Activated T-helper 2 cell treated with anti-CD3 and anti-CD28 coated beads, Interferon-gamma antibody, Interleukin-2, Interleukin-4, amounts not matched to agents 10 μg/mL and 5 μg/mL and 100 μg/mL, durations not matched to agents 14 hours and 24 hours and 36 hours (primary cell): ENCODE measurements at regions of chr7 and their contacts with region 1.

Region 1: DNA sequence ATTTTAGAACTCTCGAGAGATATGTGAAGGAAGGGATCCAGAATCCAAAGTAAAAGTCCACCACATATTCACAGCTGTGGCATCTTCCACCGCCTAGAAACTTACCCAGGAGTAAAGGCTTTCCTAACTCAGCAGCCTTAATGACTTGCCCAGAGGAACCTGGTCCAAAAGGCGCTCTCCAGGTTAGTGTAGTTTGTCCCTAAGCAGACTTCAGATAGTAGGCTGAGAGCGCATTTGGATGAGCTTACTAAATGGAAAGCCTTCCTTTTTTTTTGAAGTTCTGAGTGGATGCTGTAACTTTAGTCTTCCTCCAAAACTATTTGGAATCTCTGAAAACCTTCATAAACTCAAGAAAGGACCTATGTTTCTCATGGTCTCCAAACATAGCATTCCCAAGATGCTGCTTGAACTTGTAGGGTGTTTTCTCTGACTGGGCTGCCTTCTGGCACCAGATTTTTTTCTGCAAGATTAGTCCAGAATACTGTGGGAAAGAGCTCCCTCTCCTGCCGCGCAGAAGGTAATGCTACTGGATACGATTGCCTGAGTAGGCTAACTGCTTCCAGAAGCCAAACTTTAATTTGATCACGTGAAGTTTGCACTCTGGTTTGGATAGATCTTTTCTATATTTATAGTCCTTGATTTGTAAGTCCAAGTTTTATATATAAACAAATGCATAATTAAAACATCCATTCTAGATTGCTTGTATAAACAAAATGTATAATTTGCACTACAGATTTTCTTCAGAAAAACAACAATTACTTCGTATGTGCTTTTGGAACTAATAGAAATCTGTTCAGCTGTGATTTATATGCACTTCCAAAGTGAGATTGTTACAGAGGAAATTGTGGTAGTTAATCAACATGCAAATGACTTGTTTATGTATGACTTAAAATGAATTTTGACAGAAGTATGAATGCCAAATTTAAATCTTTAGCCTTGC is 19.6 kb upstream of the GPR37 start:
- DNase-seq: no peak
- H3K4me3 Mint-ChIP-seq: no peak overlapping the region
- H3K27ac Mint-ChIP-seq: no peak overlapping the region
- H3K4me1 Mint-ChIP-seq: no peaks in the 10 kb centered on the region
- H3K27me3 Mint-ChIP-seq: peaks cover 2% of the 10 kb centered on the region

Region 2: DNA sequence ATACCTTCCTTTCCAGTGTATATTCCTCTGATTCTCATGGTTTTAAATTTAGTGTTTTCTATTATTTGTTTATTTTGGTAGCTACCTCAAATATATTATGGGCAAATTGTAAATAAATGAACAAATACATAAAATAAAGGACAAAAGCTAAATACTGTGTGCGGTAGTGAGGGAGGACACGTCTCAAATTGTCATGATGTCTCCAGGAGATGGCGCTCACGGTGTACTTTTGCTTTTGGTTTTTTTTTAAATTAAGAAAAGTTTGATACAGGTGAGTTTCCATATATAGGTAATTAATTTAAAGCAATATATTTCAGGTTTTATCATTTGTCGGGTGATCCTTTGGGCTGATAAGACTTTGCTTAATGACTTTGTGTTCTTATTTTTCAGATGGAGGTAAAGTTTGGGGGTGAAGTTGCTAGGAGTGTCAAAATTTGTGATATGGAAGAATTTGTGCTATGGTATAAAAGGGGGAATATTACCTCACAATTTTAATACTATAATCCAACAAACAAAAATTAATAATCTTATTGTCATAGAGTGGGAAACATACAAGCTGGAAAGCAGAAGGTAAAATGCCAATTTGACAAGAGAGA is 683.9 kb before region 1 on chr7:
- intact Hi-C with region 1: loop called (anchors 5 kb)
- DNase-seq: no peak
- H3K4me3 Mint-ChIP-seq: no peak overlapping the region
- H3K27ac Mint-ChIP-seq: no peak overlapping the region
- H3K4me1 Mint-ChIP-seq: no peaks in the 10 kb centered on the region
- H3K27me3 Mint-ChIP-seq: no peaks in the 10 kb centered on the region

Region 3: DNA sequence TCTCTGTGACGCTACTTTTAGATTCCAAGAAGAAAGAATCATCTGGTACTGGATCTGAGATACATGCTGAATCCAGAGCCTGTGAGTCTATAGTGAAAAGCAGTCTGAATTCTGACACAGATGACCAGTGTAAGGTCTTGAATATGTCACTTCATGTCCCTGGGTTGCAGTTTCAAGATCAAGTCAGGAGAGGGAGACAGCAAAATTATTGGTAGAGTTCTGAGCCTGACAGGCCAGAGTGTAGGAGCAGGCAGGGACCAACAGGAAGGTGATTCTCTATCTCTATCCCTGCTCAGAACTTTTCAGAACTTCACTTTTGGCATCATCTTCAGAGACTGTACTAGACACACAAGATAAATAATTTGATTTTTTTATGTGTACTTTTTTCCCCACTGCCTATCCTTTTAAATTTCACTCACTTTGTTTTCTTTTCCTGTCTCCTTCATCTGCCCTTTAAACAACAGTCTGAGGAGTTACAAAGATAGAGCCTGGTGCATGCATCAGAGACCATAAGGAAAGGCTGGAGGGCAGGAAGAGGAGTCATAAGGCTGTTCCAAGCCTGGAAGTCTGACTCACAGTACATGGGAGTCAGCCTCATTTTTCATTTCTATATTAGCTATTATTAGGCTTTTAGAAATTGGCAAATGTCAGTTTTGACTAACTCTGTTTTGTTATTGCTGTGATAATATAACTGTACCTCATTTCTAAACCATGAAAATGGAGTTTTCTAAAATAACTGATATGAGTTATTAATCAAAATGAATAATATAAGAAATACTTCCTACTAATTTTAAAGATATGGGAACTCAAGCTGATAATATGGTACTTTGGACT is 632.1 kb before region 1 on chr7:
- intact Hi-C with region 1: loop called (anchors 10 kb)
- DNase-seq: no peak
- H3K4me3 Mint-ChIP-seq: no peak overlapping the region
- H3K27ac Mint-ChIP-seq: no peak overlapping the region
- H3K4me1 Mint-ChIP-seq: no peaks in the 10 kb centered on the region
- H3K27me3 Mint-ChIP-seq: no peaks in the 10 kb centered on the region

Region 4: DNA sequence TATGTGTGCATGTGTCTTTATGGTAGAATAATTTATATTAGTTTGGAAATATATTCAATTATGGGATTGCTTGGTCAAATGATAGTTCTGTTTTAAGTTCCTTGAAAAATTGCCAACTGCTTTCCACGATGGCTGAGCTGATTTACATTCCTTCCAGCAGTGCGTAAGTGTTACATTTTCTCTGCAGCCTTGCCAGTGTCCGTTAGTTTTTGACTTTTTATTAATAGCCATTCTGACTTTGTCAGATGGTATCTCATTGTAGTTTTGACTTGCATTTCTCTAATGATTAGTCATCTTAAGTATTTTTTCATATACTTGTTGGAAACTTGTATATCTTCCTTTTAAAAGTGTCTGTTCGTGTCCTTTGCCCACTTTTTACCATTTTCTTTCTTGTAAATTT is 578.7 kb after region 1 on chr7:
- intact Hi-C with region 1: no loop called
- DNase-seq: no peak
- H3K4me3 Mint-ChIP-seq: no peak overlapping the region
- H3K27ac Mint-ChIP-seq: no peak overlapping the region
- H3K4me1 Mint-ChIP-seq: no peaks in the 10 kb centered on the region
- H3K27me3 Mint-ChIP-seq: no peaks in the 10 kb centered on the region